OCI-LY7 (cell line): ENCODE measurements at regions of chr3 and their contacts with region 1.

Region 1: DNA sequence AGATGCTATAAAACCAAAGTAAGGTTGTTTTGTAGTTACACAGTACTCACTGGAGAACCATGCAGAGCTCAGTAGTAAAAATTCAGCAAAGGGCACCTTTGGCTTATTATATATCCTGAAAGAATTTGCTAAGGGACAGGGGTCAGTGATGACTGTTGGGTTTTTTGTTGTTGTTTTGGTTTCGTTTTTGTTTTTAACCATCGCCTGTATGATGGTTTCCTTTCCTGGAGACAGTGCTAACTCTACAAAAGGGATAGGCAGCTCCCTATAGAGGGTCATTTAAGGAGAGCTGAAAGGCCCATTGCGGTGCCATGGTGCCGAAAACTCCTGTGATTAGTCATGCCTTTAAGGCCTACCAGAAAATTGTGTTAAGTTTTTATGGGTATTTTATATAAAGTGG is 118.2 kb upstream of the GOLIM4 start:
- DNase-seq: peak; percentile 29
- H3K4me3 ChIP-seq: peak overlapping the region; percentile 37
- H3K27ac ChIP-seq: no peak overlapping the region
- H3K4me1 ChIP-seq: peaks cover 46% of the 10 kb centered on the region
- CTCF ChIP-seq: no peak

Region 2: GRCh38 chr3:168285506-168285905 is 71.6 kb after region 1 on chr3:
- CTCF ChIA-PET with region 1: no interaction called
- POLR2A ChIA-PET with region 1: no interaction called
- intact Hi-C with region 1: no loop called
- DNase-seq: no peak
- H3K4me3 ChIP-seq: no peak overlapping the region
- H3K27ac ChIP-seq: no peak overlapping the region
- H3K4me1 ChIP-seq: no peaks in the 10 kb centered on the region
- CTCF ChIP-seq: no peak

Region 3: DNA sequence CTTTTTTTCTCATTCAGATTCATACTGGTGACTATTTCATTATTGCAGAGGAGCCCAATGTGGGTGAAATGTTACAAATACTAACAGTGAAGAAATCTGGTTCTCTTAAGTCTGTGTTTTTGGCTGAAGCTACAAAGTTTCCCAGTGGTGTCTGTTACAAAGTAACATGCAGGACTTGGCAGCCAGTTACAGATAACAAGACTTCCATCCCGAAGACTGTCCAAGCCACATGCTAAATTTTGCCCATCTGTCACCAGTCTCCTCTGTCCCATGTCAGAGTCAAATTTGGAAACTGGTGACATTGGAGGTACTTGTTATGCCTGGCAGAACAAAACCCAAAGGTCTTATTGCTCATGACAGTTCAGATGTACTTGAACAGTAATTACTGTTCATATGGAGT is 151.0 kb after region 1 on chr3:
- CTCF ChIA-PET with region 1: no interaction called
- POLR2A ChIA-PET with region 1: no interaction called
- intact Hi-C with region 1: no loop called
- DNase-seq: no peak
- H3K4me3 ChIP-seq: no peak overlapping the region
- H3K27ac ChIP-seq: no peak overlapping the region
- H3K4me1 ChIP-seq: no peaks in the 10 kb centered on the region
- CTCF ChIP-seq: no peak

Region 4: GRCh38 chr3:168620826-168621225 is 406.9 kb after region 1 on chr3:
- CTCF ChIA-PET with region 1: no interaction called
- POLR2A ChIA-PET with region 1: interaction called, 3 read pairs
- intact Hi-C with region 1: loop called (anchors 2 kb)
- DNase-seq: peak; percentile 32
- H3K4me3 ChIP-seq: no peak overlapping the region
- H3K27ac ChIP-seq: no peak overlapping the region
- H3K4me1 ChIP-seq: no peaks in the 10 kb centered on the region
- CTCF ChIP-seq: peak; percentile 75

Region 5: GRCh38 chr3:168693870-168694269 is 479.9 kb after region 1 on chr3:
- CTCF ChIA-PET with region 1: no interaction called
- POLR2A ChIA-PET with region 1: no interaction called
- intact Hi-C with region 1: loop called (anchors 10 kb)
- DNase-seq: no peak
- H3K4me3 ChIP-seq: no peak overlapping the region
- H3K27ac ChIP-seq: no peak overlapping the region
- H3K4me1 ChIP-seq: no peaks in the 10 kb centered on the region
- CTCF ChIP-seq: no peak

Region 6: GRCh38 chr3:168847291-168847883 is 633.5 kb after region 1 on chr3:
- CTCF ChIA-PET with region 1: interaction called, 10 read pairs
- POLR2A ChIA-PET with region 1: interaction called, 5 read pairs
- intact Hi-C with region 1: loop called (anchors 1 kb)
- DNase-seq: peak; percentile 44
- H3K4me3 ChIP-seq: no peak overlapping the region
- H3K27ac ChIP-seq: no peak overlapping the region
- H3K4me1 ChIP-seq: no peaks in the 10 kb centered on the region
- CTCF ChIP-seq: peak; percentile 87

Region 7: DNA sequence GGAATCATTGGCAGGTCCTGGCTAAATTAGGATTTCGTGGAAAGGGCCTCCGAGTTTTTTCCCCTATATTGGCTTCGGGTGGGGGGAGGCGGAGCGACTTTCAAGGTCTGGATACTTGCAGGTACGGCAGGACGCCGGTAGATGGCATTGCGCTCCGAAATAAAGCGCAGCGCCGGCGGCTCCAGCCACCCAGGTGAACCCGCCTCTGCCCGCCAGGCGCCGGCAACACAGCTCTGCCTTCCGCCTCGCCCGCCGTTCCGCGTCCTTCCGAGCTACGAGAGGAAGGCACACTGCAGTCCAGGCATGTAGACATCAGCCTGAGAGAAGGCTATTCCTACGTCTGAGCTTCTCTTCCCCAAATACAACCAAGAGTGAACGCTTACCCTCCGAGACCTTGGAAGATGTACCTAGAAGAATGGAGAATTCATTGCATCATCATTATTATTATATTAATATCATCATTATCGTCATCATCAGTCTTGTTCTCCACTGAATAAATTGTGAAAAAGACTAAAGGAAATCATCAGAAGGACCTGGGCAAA is 935.5 kb after region 1 on chr3:
- CTCF ChIA-PET with region 1: no interaction called
- POLR2A ChIA-PET with region 1: no interaction called
- intact Hi-C with region 1: loop called (anchors 10 kb)
- DNase-seq: peak; percentile 82
- H3K4me3 ChIP-seq: peak overlapping the region; percentile 27
- H3K27ac ChIP-seq: no peak overlapping the region
- H3K4me1 ChIP-seq: no peaks in the 10 kb centered on the region
- CTCF ChIP-seq: peak; percentile 84